Calu3 (cell line): ENCODE measurements at regions of chr12 and their contacts with region 1.

Region 1: DNA sequence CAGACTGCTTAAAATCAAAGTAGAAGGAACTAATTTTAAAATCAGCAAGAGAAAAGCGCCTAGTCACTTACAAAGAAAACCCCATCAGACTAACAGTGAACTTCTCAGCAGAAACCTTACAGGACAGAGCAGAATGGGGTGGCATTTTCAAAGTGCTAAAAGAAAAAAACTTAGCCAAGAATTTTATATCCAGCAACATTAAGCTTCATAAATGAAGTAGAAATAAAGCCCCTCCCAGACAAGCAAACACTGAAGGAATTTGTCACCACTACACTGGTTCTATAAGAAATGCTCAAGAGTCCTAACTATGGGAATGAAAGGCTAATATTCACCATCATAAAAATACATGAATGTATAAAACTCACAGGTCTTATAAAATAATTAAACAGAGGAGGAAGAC is 6.4 kb upstream of the ZNF268 start:
- DNase-seq: no peak
- H3K4me3 Mint-ChIP-seq: no peak overlapping the region
- H3K27ac Mint-ChIP-seq: no peak overlapping the region
- H3K4me1 Mint-ChIP-seq: no peaks in the 10 kb centered on the region
- H3K27me3 Mint-ChIP-seq: no peaks in the 10 kb centered on the region
- CTCF ChIP-seq: no peak

Region 2: DNA sequence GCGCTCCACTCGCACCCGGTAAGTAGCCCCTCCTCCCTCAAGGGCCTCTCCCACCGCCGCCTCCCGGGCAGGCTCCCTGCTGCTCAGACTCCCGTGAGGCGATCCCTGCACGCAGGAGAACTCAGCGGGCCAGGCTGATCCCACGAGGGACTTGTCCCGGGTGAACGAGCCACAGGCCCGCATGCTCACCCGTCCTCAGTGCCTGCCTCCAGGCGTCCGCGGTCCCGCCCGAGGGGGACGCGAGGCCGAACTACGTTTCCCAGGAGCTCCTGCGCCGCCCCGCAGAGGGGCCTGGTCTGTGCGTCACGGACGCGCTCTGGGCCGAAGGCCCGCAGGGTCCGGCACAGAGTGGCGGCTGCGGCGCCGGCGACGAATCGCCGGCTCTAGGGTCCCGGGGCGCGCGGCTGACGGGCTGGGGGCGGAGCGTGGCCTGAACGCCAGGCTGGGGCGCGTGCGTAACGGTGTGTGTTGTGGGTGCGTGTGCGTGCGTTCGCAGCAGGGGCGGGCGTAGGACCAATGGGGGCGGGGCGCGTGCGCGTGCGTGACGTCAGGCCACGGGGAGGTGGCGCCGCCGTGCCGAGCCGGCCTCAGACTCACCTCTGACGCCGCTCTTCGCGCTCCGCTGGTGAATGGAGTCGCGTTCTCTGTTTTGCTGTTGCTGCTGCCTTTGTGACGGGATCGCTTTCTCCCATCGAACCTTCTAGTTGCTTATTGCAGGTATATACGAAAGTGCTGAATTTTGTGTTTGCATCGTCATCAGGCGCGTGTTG is 44.7 kb before region 1 on chr12 and contains the starts of genes ZNF10 and ZNF891:
- CTCF ChIA-PET with region 1: no interaction called
- intact Hi-C with region 1: loop called (anchors 5 kb)
- DNase-seq: peak; percentile 100
- H3K4me3 Mint-ChIP-seq: peak within 1 kb of the TSS; percentile 100
- H3K27ac Mint-ChIP-seq: peak within 1 kb of the TSS; percentile 95
- H3K4me1 Mint-ChIP-seq: peaks cover 8% of the 10 kb centered on the region
- H3K27me3 Mint-ChIP-seq: no peaks in the 10 kb centered on the region
- CTCF ChIP-seq: no peak
- total RNA-seq, gene ZNF10: 19.1 and 23.0 TPM in 2 replicates
- total RNA-seq, gene ZNF891: 4.2 and 4.8 TPM in 2 replicates